ENCODE measurements at regions of chr3 and their contacts with region 1.

Region 1: GRCh38 chr3:108662130-108662738 is 72.7 kb downstream of the DZIP3 start:
- DNase-seq: no peak
- ATAC-seq: peak; percentile 66
- H3K4me3 Mint-ChIP-seq: no peak overlapping the region
- H3K27ac Mint-ChIP-seq: no peak overlapping the region
- H3K4me1 Mint-ChIP-seq: peaks cover 4% of the 10 kb centered on the region
- H3K27me3 Mint-ChIP-seq: no peaks in the 10 kb centered on the region
- CTCF ChIP-seq: no peak

Region 2: DNA sequence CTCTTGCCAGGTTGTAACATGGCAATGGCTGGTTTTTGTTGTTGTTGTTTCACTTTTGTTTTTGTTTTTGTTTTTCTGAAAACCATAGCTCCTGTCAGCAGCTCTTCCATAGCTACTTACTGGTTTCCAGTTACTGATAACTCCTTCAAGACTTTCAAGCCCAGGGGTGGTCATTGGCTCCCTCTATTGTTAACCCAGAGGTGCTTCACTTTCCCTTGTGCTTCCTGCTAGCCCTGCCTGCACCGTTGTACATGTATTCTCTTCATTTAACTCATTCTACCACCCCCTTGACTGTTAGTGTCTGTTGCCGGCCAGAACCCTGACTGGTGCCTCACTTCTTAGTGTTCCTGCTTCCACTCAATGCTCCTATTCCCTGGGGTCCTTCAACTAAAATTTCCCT is 156.2 kb after region 1 on chr3:
- CTCF ChIA-PET with region 1: no interaction called
- POLR2A ChIA-PET with region 1: no interaction called
- intact Hi-C with region 1: loop called (anchors 1 kb)
- DNase-seq: no peak
- ATAC-seq: no peak
- H3K4me3 Mint-ChIP-seq: no peak overlapping the region
- H3K27ac Mint-ChIP-seq: no peak overlapping the region
- H3K4me1 Mint-ChIP-seq: no peaks in the 10 kb centered on the region
- H3K27me3 Mint-ChIP-seq: peaks cover 6% of the 10 kb centered on the region
- CTCF ChIP-seq: no peak

Region 3: DNA sequence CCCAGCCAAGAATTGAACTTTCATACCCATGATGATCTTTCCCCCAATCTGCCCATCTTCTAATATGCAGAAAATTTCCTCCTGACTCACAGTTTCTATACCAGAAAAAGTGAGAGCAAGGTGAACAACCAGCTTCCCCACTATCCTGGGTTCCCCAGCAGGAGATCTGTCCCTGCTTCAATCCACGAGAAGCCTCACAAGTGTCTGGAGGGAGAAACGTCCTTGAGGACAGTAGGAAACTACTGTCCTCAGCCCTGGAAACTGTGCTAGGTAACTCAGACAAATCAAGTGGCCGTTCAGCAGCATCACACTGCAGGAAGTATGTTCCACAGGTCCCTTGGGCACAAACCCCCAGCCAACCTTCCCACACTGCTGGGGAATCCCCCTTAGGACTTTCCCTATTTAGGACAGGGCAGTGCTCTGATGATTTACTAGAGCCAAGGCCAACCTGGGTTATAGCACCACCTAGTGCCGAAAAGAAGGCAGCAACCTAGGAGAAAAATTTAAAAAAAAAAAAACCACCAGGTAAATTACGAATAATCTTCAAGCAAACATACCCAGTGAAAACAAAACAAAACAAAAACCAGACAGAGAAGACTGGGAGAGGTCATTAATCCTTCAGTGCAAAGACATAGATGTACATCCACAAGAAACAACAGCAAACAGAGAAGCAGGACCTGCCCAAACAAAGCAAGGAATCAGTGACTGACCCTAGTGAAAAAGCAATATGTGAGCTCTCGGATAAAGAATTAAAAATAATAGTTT is 419.7 kb after region 1 on chr3:
- CTCF ChIA-PET with region 1: interaction called, 3 read pairs
- POLR2A ChIA-PET with region 1: no interaction called
- intact Hi-C with region 1: loop called (anchors 1 kb)
- DNase-seq: peak; percentile 23
- ATAC-seq: peak; percentile 97
- H3K4me3 Mint-ChIP-seq: no peak overlapping the region
- H3K27ac Mint-ChIP-seq: no peak overlapping the region
- H3K4me1 Mint-ChIP-seq: peaks cover 6% of the 10 kb centered on the region
- H3K27me3 Mint-ChIP-seq: peaks cover 9% of the 10 kb centered on the region
- CTCF ChIP-seq: no peak

Region 4: GRCh38 chr3:109275702-109276293 is 613.6 kb after region 1 on chr3:
- CTCF ChIA-PET with region 1: no interaction called
- POLR2A ChIA-PET with region 1: no interaction called
- intact Hi-C with region 1: no loop called
- DNase-seq: no peak
- ATAC-seq: no peak
- H3K4me3 Mint-ChIP-seq: no peak overlapping the region
- H3K27ac Mint-ChIP-seq: no peak overlapping the region
- H3K4me1 Mint-ChIP-seq: no peaks in the 10 kb centered on the region
- H3K27me3 Mint-ChIP-seq: no peaks in the 10 kb centered on the region
- CTCF ChIP-seq: no peak